ENCODE measurements at regions of chr12 and their contacts with region 1.

Region 1: DNA sequence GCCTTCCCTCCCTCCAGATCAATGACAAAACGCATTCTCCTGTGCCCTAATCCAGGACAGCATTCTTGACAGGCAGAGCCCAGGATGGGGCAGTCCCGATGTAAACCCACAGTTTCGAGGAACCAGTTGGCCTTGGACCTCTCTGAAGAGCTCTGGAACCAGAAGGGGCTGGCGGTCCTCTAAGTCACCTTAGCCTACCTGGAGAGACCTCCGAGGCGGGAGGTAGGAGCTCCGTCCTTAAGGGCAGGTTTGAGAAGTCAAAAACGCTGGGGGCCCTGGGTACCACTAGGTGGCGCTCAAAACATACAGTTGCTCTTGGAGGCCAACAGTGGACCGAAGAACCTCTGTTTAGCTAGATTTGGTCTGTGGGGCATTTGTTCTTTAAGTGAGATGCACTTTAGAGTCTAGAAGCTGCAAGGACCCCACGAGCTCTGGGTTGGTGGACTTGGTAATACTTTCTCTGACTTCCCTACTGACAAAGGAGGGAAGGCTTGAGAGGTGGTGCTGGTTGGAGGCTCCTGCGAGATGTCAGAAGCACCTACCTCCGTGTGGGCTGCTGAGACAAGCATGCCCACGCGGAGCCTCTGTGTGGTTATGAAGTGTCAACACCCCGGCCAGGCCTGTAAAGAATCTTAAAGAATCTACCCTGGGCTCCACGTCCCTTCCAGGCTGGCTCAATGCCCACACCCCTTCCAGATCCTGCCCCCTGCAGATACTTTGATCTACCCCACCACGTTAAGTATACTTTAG is 74.8 kb upstream of the CHST11 start:
- DNase-seq: peak; percentile 69
- H3K4me3 Mint-ChIP-seq: peak overlapping the region; percentile 52
- H3K27ac Mint-ChIP-seq: peak overlapping the region; percentile 33
- H3K4me1 Mint-ChIP-seq: peaks cover 20% of the 10 kb centered on the region
- H3K27me3 Mint-ChIP-seq: peaks cover 2% of the 10 kb centered on the region

Region 2: GRCh38 chr12:104632724-104633201 is 250.9 kb after region 1 on chr12:
- intact Hi-C with region 1: no loop called
- DNase-seq: no peak
- H3K4me3 Mint-ChIP-seq: no peak overlapping the region
- H3K27ac Mint-ChIP-seq: peak overlapping the region; percentile 61
- H3K4me1 Mint-ChIP-seq: peaks cover 48% of the 10 kb centered on the region
- H3K27me3 Mint-ChIP-seq: no peaks in the 10 kb centered on the region

Region 3: GRCh38 chr12:104825408-104825807 is 443.5 kb after region 1 on chr12:
- intact Hi-C with region 1: loop called (anchors 5 kb)
- DNase-seq: no peak
- H3K4me3 Mint-ChIP-seq: no peak overlapping the region
- H3K27ac Mint-ChIP-seq: no peak overlapping the region
- H3K4me1 Mint-ChIP-seq: peaks cover 8% of the 10 kb centered on the region
- H3K27me3 Mint-ChIP-seq: no peaks in the 10 kb centered on the region

Region 4: GRCh38 chr12:104877123-104877705 is 495.3 kb after region 1 on chr12:
- intact Hi-C with region 1: loop called (anchors 1 kb)
- DNase-seq: no peak
- H3K4me3 Mint-ChIP-seq: no peak overlapping the region
- H3K27ac Mint-ChIP-seq: no peak overlapping the region
- H3K4me1 Mint-ChIP-seq: peaks cover 21% of the 10 kb centered on the region
- H3K27me3 Mint-ChIP-seq: peaks cover 2% of the 10 kb centered on the region